ENCODE measurements at regions of chr11 and their contacts with region 1.

Region 1: DNA sequence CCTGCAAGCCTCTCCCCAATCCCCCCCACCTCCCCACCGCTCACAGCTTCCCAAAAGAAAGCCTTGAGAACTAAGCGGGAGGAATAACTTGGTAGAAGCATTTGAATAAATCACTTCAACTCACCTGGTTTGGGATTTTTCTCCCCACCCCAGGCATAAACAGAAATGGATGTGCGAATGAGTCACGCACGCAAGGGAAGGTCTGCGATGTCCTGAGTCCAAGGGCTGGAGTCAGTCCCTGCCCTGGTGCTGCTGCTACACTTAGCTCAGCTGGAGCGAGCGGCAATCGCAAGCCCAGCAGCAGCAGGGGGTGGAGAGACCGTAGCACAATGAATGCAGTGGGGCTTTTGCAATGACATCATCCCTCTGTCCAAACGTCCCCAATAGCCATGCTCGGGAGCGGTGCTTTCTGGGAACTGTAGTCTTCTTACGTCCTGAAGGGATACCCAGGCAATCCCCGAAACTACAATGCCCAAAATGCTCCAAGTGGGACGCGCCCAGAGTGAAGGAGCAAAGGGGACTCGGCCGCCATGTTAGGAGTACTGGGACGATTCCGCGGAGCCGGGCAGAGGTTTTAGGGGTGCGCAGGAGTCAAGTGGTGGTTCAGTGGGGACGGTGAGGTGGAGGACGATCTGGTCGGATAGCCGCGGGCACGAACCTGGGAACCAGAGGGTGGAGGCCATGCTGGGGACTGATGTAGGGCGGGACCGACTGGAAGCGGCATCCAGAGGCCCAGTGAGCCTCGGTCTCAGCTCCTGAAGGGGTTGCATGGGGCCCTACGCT is at the start of gene RAB30:
- DNase-seq: peak; percentile 84 to 99 (median 89)
- ATAC-seq: peak; percentile 91
- H3K4me3 ChIP-seq: peak within 1 kb of the TSS; percentile 68
- H3K4me3 Mint-ChIP-seq: no peak within 1 kb of the TSS
- H3K27ac ChIP-seq: peak within 1 kb of the TSS; percentile 78 to 91
- H3K27ac Mint-ChIP-seq: no peak within 1 kb of the TSS
- H3K4me1 ChIP-seq: peaks cover 35% of the 10 kb centered on the region
- H3K4me1 Mint-ChIP-seq: no peaks in the 10 kb centered on the region
- H3K27me3 ChIP-seq: no peaks in the 10 kb centered on the region
- H3K27me3 Mint-ChIP-seq: no peaks in the 10 kb centered on the region
- CTCF ChIP-seq: no peak
- total RNA-seq, gene RAB30: 76.2 to 79.2 TPM

Region 2: GRCh38 chr11:81946831-81947230 is 1124.9 kb before region 1 on chr11:
- CTCF ChIA-PET with region 1: no interaction called
- POLR2A ChIA-PET with region 1: no interaction called
- intact Hi-C with region 1: no loop called
- DNase-seq: no peak
- ATAC-seq: no peak
- H3K4me3 ChIP-seq: no peak overlapping the region
- H3K4me3 Mint-ChIP-seq: no peak overlapping the region
- H3K27ac ChIP-seq: no peak overlapping the region
- H3K27ac Mint-ChIP-seq: no peak overlapping the region
- H3K4me1 ChIP-seq: no peaks in the 10 kb centered on the region
- H3K4me1 Mint-ChIP-seq: no peaks in the 10 kb centered on the region
- H3K27me3 ChIP-seq: no peaks in the 10 kb centered on the region
- H3K27me3 Mint-ChIP-seq: no peaks in the 10 kb centered on the region
- CTCF ChIP-seq: no peak

Region 3: DNA sequence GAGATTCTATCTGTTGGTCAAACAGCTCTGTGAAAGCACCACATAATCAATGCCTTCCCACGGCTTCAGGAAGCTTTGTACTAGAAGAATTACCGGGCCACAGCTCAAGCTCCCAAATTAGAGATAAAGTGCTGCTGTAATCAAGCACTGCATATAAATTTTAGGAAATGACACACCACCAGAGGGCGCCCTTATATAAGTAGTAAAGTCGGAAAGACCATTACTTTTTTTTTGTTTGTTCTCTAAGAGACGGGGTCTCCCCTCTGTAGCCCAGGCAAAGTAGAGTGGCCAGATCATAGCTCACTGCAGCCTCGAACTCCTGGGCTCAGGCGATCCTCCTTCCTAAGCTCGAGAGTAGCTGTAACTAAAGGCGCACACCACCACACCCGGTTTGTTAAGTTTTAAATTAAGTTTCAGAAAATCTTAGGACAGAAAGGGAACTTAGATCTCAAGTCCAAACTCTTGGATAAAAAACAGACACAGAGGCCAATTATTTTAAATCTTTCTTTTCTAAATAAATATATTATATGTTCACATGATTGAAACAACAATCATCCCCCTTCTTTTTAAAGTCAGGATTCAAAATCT is 204.2 kb before region 1 on chr11:
- CTCF ChIA-PET with region 1: no interaction called
- POLR2A ChIA-PET with region 1: interaction called, 3 read pairs
- intact Hi-C with region 1: loop called in 1 of 2 experiments (anchors 5 kb)
- DNase-seq: peak; percentile 37 to 88 (median 70)
- ATAC-seq: peak; percentile 66
- H3K4me3 ChIP-seq: no peak overlapping the region
- H3K4me3 Mint-ChIP-seq: no peak overlapping the region
- H3K27ac ChIP-seq: no peak overlapping the region
- H3K27ac Mint-ChIP-seq: no peak overlapping the region
- H3K4me1 ChIP-seq: peaks cover 5% of the 10 kb centered on the region
- H3K4me1 Mint-ChIP-seq: peaks cover 11% of the 10 kb centered on the region
- H3K27me3 ChIP-seq: no peaks in the 10 kb centered on the region
- H3K27me3 Mint-ChIP-seq: no peaks in the 10 kb centered on the region
- CTCF ChIP-seq: peak; percentile 80

Region 4: GRCh38 chr11:82906244-82906654 is 165.5 kb before region 1 on chr11:
- CTCF ChIA-PET with region 1: interaction called, 3 read pairs
- POLR2A ChIA-PET with region 1: interaction called, 80 read pairs
- intact Hi-C with region 1: loop called in 1 of 2 experiments (anchors 2 kb)
- DNase-seq: peak in 3 of 14 experiments; percentile 45 to 63 (median 52)
- ATAC-seq: no peak
- H3K4me3 ChIP-seq: no peak overlapping the region
- H3K4me3 Mint-ChIP-seq: no peak overlapping the region
- H3K27ac ChIP-seq: no peak overlapping the region
- H3K27ac Mint-ChIP-seq: peak overlapping the region; percentile 2
- H3K4me1 ChIP-seq: peaks cover 9% of the 10 kb centered on the region
- H3K4me1 Mint-ChIP-seq: peaks cover 28% of the 10 kb centered on the region
- H3K27me3 ChIP-seq: no peaks in the 10 kb centered on the region
- H3K27me3 Mint-ChIP-seq: no peaks in the 10 kb centered on the region
- CTCF ChIP-seq: peak; percentile 73

Region 5: GRCh38 chr11:82959987-82960778 is 111.6 kb before region 1 on chr11:
- CTCF ChIA-PET with region 1: interaction called, 3 read pairs
- POLR2A ChIA-PET with region 1: interaction called, 18 read pairs
- intact Hi-C with region 1: loop called in 1 of 2 experiments (anchors 1 kb)
- DNase-seq: peak in 10 of 14 experiments; percentile 12 to 92 (median 46)
- ATAC-seq: peak; percentile 85
- H3K4me3 ChIP-seq: peak overlapping the region; percentile 37
- H3K4me3 Mint-ChIP-seq: peak overlapping the region; percentile 69
- H3K27ac ChIP-seq: peak overlapping the region; percentile 76 to 81
- H3K27ac Mint-ChIP-seq: peak overlapping the region; percentile 97
- H3K4me1 ChIP-seq: peaks cover 45% of the 10 kb centered on the region
- H3K4me1 Mint-ChIP-seq: peaks cover 88% of the 10 kb centered on the region
- H3K27me3 ChIP-seq: no peaks in the 10 kb centered on the region
- H3K27me3 Mint-ChIP-seq: no peaks in the 10 kb centered on the region
- CTCF ChIP-seq: no peak

Region 6: GRCh38 chr11:83102834-83103233 is 31.1 kb after region 1 on chr11:
- CTCF ChIA-PET with region 1: no interaction called
- POLR2A ChIA-PET with region 1: no interaction called
- intact Hi-C with region 1: no loop called
- DNase-seq: no peak
- ATAC-seq: no peak
- H3K4me3 ChIP-seq: no peak overlapping the region
- H3K4me3 Mint-ChIP-seq: no peak overlapping the region
- H3K27ac ChIP-seq: no peak overlapping the region
- H3K27ac Mint-ChIP-seq: no peak overlapping the region
- H3K4me1 ChIP-seq: no peaks in the 10 kb centered on the region
- H3K4me1 Mint-ChIP-seq: no peaks in the 10 kb centered on the region
- H3K27me3 ChIP-seq: no peaks in the 10 kb centered on the region
- H3K27me3 Mint-ChIP-seq: peaks cover 6% of the 10 kb centered on the region
- CTCF ChIP-seq: no peak

Region 7: GRCh38 chr11:83115551-83115950 is 43.8 kb after region 1 on chr11:
- CTCF ChIA-PET with region 1: no interaction called
- POLR2A ChIA-PET with region 1: interaction called, 12 read pairs
- intact Hi-C with region 1: loop called (anchors 5 kb)
- DNase-seq: no peak
- ATAC-seq: no peak
- H3K4me3 ChIP-seq: no peak overlapping the region
- H3K4me3 Mint-ChIP-seq: peak overlapping the region; percentile 75
- H3K27ac ChIP-seq: no peak overlapping the region
- H3K27ac Mint-ChIP-seq: peak overlapping the region; percentile 72
- H3K4me1 ChIP-seq: peaks cover 34% of the 10 kb centered on the region
- H3K4me1 Mint-ChIP-seq: peaks cover 52% of the 10 kb centered on the region
- H3K27me3 ChIP-seq: no peaks in the 10 kb centered on the region
- H3K27me3 Mint-ChIP-seq: no peaks in the 10 kb centered on the region
- CTCF ChIP-seq: no peak

Region 8: DNA sequence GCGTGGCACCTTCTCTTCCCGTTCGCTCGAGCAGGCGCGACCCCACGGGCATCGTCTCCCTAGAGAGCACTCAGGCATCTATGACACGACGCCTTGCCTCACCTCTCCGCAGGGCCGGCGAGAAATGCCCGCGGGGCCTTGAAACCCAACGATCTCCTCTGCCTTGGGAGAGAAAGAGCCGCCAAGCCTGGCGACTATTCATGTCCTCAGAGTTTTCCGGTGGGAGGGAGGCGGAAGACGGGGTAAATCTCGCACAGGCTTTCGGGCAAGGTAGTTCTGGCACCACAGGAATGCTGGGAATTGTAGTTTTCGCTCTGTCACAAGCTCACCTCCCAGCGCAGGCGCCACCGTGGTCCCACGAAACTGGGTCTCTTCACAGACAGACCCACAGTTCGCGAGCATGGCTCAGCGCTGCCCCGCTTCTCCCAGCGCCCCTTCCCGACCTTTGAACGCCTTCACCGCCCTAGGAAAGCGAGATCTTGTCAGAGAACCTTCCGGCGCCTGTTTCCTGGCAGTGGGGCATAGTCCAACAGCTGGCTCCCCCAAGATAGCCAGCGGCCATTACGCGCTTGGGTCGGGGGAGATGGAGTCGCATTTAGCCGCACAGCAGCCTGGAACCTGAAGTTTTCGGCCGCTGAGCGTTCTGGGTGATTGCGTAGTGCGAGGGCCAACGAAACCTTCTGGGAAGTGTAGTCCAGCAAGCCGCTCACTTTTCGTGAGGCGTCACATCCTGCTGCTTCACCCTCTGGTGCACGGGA is 214.2 kb after region 1 on chr11 and contains the start of gene CCDC90B:
- CTCF ChIA-PET with region 1: no interaction called
- POLR2A ChIA-PET with region 1: interaction called, 5 read pairs
- intact Hi-C with region 1: loop called (anchors 1 kb)
- DNase-seq: peak; percentile 88 to 98 (median 90)
- ATAC-seq: peak; percentile 90
- H3K4me3 ChIP-seq: peak within 1 kb of the TSS; percentile 92
- H3K4me3 Mint-ChIP-seq: peak within 1 kb of the TSS; percentile 97
- H3K27ac ChIP-seq: peak within 1 kb of the TSS; percentile 95 to 99
- H3K27ac Mint-ChIP-seq: peak within 1 kb of the TSS; percentile 100
- H3K4me1 ChIP-seq: peaks cover 13% of the 10 kb centered on the region
- H3K4me1 Mint-ChIP-seq: peaks cover 52% of the 10 kb centered on the region
- H3K27me3 ChIP-seq: no peaks in the 10 kb centered on the region
- H3K27me3 Mint-ChIP-seq: no peaks in the 10 kb centered on the region
- CTCF ChIP-seq: no peak
- total RNA-seq, gene CCDC90B: 23.5 to 25.7 TPM